ENCODE measurements at regions of chr12 and their contacts with region 1.

Region 1: DNA sequence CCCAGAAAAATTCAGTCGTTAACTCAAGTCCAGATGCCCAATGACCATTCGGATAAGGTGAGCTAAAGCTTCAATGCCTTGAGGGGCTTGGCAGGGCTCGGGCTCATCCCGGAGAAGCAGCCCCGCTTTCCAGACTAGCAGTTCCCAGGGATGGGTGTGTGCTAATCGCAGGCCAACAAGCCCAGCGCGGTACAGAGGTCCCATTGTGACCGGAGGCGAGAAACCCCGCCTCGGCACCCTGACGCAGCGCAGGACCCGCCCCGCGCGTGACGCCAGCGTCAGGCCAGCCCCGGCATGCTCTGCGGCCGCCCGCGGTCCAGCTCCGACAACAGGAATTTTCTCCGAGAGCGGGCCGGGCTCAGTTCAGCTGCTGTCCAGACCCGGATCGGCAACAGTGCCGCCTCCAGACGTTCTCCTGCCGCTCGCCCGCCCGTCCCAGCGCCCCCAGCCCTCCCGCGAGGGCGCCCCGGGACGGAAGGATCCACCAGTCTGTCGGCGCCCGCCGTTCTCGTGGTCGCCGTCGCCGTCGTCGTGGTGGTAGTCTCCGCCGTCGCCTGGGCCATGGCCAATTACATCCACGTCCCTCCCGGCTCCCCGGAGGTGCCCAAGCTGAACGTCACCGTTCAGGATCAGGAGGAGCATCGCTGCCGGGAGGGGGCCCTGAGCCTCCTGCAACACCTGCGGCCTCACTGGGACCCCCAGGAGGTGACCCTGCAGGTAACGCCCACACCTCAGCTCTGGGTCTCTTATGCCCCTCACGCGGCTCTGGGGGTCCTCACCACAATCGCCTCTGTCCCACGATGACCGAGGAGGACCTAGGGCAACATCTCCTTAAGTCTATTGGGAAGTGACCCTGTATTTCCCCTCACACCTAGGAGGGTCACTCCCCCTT is at the start of gene ETNK1:
- DNase-seq: peak; percentile 90
- H3K4me3 Mint-ChIP-seq: peak within 1 kb of the TSS; percentile 95
- H3K27ac Mint-ChIP-seq: peak within 1 kb of the TSS; percentile 91
- H3K4me1 Mint-ChIP-seq: peaks cover 37% of the 10 kb centered on the region
- H3K27me3 Mint-ChIP-seq: peaks cover 10% of the 10 kb centered on the region

Region 2: DNA sequence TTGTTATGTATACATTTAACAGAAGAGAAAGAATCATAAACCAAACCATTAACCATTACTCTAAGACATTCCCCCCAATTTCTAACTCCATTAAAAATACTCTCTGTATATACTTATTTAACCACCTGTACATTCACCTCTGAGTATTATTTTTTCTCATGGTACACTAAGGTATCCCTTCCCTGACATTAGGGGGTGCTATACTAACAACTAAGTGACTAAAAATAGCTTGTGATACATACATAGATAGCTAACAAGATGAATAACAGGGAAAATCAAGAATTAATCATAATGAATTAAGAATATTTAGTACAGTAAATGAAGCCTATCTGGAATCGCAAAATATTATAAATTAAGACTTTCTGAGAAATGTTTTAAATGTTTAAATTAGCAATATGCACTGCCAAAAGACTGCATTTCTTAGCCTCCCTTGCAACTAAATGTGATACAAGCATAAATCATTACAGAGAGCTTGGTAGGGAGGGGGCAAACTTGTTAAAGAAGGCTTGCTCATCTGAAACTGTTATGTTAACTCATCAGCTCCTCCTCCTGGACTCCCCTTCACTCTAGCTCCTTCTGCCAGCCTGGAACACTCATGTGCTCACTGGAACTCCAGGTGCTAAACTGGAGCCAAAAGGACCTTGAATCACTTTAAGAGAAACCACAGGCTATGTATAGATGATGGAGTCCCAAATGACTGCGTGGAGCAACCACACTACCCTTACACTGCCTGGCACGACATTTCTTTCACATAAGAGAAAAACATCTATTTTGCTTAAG is 95.6 kb before region 1 on chr12:
- CTCF ChIA-PET with region 1: interaction called, 16 read pairs
- DNase-seq: no peak
- H3K4me3 Mint-ChIP-seq: no peak overlapping the region
- H3K27ac Mint-ChIP-seq: no peak overlapping the region
- H3K4me1 Mint-ChIP-seq: peaks cover 3% of the 10 kb centered on the region
- H3K27me3 Mint-ChIP-seq: no peaks in the 10 kb centered on the region

Measured in activated naive CD4-positive, alpha-beta T cell treated with anti-CD3 and anti-CD28 coated beads, Interleukin-2, amount 10 ng/mL, durations not matched to agents 7 days and 5 days (primary cell).